ENCODE measurements at regions of chr11 and their contacts with region 1.

Region 1: DNA sequence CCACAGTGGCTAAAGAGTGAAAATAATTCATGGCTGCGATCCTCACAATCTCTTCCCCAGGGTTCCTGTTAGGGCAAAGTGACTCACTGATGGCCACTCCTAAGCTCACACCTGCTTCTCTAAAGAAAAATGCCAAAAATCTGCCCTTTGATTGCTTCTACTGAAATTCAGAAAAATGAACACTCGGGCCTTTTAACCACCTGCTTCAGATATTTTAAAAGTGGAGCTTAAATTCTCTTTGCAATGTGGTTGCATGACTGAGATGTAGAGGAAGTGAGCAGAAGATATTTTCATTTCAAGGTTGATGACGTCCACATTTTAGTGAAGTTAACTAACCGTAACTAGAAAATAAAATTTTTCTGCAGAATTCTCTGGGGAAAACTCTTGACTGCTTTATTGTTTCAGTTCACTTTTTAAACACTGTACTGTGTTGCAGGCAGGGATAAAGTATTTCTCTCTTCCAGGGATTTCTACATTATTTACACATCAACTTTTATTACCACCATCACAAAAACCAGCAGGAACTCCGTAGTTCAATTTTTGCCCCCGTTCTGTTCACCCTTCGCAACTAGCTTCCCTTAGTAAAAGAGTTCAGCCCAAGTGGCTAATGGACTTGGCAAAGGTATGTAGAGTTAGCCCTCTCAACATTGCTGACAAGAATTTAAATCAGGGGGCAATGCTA is 8.5 kb downstream of the RAB30 start:
- DNase-seq: peak; percentile 88
- ATAC-seq: peak; percentile 77
- H3K4me3 ChIP-seq: peak overlapping the region; percentile 66
- H3K27ac ChIP-seq: peak overlapping the region; percentile 96
- H3K4me1 ChIP-seq: peaks cover 43% of the 10 kb centered on the region
- H3K27me3 ChIP-seq: no peaks in the 10 kb centered on the region
- CTCF ChIP-seq: no peak
- EP300 ChIP-seq: peak; percentile 96 to 98
- POLR2A ChIP-seq: no peak
- RAD21 ChIP-seq: no peak

Region 2: DNA sequence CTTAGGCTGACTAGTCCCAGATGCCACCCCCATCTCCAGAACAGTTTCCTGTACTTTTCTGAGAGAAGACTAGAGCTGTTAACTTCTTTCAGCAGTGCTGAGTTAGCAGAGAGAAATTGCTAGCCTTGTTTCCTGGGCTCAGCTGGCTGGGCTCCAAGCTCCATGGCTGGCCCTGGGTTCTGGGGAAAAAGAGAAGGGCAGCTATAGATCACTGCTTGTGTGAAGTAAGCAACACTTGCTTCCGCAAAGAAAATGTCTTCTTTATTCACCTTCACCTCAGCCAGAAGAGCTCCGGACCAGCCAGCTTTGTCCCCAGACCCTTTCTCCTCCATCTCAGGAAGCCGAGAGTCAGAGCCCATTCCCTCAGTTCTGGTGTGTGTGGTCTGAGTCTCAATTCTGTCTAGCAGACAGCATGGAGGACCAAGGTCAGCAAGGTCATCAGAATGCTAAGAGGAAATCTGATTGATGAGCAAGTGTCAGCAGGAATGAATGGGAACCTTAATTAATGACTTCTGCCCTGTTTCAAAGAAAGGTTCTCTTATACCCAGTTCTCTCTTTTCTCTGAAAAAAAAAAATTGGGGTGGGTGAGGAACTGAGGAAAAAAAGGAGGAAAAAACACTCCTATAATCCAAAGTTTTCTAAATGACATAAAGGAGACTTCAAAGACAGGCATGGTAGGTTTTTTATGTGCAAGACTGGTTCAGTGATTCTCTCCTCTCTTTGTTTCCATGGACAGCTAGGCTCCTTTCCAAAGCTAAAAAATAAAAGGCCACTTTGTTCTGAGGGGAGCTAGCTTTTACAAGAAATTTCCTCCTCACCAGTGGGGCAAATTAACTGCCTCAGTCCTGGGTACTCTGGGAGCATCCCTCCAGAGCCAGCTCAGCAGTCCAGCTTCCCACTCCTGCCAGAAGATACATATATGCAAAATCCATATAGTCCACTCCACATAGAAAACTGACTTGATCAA is 265.9 kb before region 1 on chr11:
- CTCF ChIA-PET with region 1: no interaction called
- POLR2A ChIA-PET with region 1: no interaction called
- RAD21 ChIA-PET with region 1: no interaction called
- SMC1A ChIA-PET with region 1: no interaction called
- in situ Hi-C with region 1: no loop called
- intact Hi-C with region 1: no loop called
- DNase-seq: no peak
- ATAC-seq: no peak
- H3K4me3 ChIP-seq: no peak overlapping the region
- H3K27ac ChIP-seq: no peak overlapping the region
- H3K4me1 ChIP-seq: no peaks in the 10 kb centered on the region
- H3K27me3 ChIP-seq: no peaks in the 10 kb centered on the region; a peak in 1 of 4 replicates
- CTCF ChIP-seq: no peak
- EP300 ChIP-seq: no peak
- POLR2A ChIP-seq: no peak
- RAD21 ChIP-seq: no peak

Region 3: GRCh38 chr11:82927254-82927880 is 135.8 kb before region 1 on chr11:
- CTCF ChIA-PET with region 1: interaction called, 4 read pairs
- POLR2A ChIA-PET with region 1: interaction called, 4 read pairs
- RAD21 ChIA-PET with region 1: interaction called, 13 read pairs
- SMC1A ChIA-PET with region 1: interaction called, 21 read pairs
- in situ Hi-C with region 1: no loop called
- intact Hi-C with region 1: no loop called
- DNase-seq: no peak
- ATAC-seq: peak; percentile 93
- H3K4me3 ChIP-seq: no peak overlapping the region
- H3K27ac ChIP-seq: no peak overlapping the region; the same call in 1 of the 2 replicates
- H3K4me1 ChIP-seq: peaks cover 20% of the 10 kb centered on the region
- H3K27me3 ChIP-seq: no peaks in the 10 kb centered on the region
- CTCF ChIP-seq: peak; percentile 73 to 77 (median 76)
- EP300 ChIP-seq: no peak
- POLR2A ChIP-seq: no peak
- RAD21 ChIP-seq: peak; percentile 63

Region 4: GRCh38 chr11:82969811-82970210 is 93.4 kb before region 1 on chr11:
- CTCF ChIA-PET with region 1: interaction called, 3 read pairs
- POLR2A ChIA-PET with region 1: interaction called, 7 read pairs
- RAD21 ChIA-PET with region 1: interaction called, 13 read pairs
- SMC1A ChIA-PET with region 1: interaction called, 29 read pairs
- in situ Hi-C with region 1: no loop called
- intact Hi-C with region 1: loop called (anchors 1 kb)
- DNase-seq: peak; percentile 84
- ATAC-seq: peak; percentile 83
- H3K4me3 ChIP-seq: no peak overlapping the region
- H3K27ac ChIP-seq: peak overlapping the region; percentile 94
- H3K4me1 ChIP-seq: peaks cover 41% of the 10 kb centered on the region
- H3K27me3 ChIP-seq: no peaks in the 10 kb centered on the region
- CTCF ChIP-seq: no peak
- EP300 ChIP-seq: peak; percentile 99 to 100
- POLR2A ChIP-seq: no peak
- RAD21 ChIP-seq: no peak

Region 5: DNA sequence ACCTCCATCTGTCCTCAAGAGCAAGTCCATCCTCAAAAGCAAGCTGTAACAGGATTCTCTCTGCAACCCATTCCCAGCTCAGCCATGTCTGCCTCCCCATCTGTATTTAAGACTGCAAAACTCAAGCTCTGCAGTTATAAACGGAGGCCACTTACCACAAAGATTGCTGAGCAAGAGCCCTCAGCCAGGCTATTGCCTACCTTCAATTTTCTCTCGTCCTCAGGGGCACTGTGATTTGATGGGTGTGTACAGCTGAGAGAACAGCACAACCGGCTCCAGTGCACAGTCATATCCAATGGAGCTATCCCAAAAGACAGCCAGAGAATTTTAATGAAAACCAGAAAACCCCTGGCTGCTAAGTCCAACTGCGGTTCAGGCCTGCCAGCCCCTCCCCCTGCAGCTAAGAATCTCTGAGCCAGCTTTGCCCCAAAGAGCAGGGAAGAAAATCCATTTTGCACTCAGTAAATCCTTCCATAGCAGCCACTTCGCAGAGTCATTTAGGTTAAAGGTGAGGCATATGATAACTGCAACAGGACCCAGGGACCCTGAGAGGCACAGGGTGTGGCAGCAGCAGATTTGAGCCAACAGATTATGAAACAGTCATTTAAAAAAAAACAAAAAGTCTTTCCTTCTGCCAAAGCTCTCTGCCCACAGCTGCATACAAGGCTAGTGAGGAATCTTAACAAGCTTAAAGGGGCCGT is 29.1 kb before region 1 on chr11:
- CTCF ChIA-PET with region 1: interaction called, 3 read pairs
- POLR2A ChIA-PET with region 1: interaction called, 21 read pairs
- RAD21 ChIA-PET with region 1: interaction called, 4 read pairs
- SMC1A ChIA-PET with region 1: interaction called, 44 read pairs
- in situ Hi-C with region 1: no loop called
- intact Hi-C with region 1: no loop called
- DNase-seq: no peak
- ATAC-seq: peak; percentile 50
- H3K4me3 ChIP-seq: 0 out of 2 replicates have a peak overlapping the region, but pooled peaks have one; percentile 10
- H3K27ac ChIP-seq: no peak overlapping the region
- H3K4me1 ChIP-seq: peaks cover 21% of the 10 kb centered on the region
- H3K27me3 ChIP-seq: no peaks in the 10 kb centered on the region
- CTCF ChIP-seq: no peak
- EP300 ChIP-seq: no peak
- POLR2A ChIP-seq: no peak
- RAD21 ChIP-seq: no peak

Region 6: GRCh38 chr11:83051760-83052671 is 11.2 kb before region 1 on chr11:
- CTCF ChIA-PET with region 1: interaction called, 6 read pairs
- POLR2A ChIA-PET with region 1: interaction called, 21 read pairs
- RAD21 ChIA-PET with region 1: interaction called, 9 read pairs
- SMC1A ChIA-PET with region 1: interaction called, 29 read pairs
- in situ Hi-C with region 1: no loop called
- intact Hi-C with region 1: no loop called
- DNase-seq: no peak
- ATAC-seq: no peak
- H3K4me3 ChIP-seq: no peak overlapping the region
- H3K27ac ChIP-seq: no peak overlapping the region
- H3K4me1 ChIP-seq: peaks cover 40% of the 10 kb centered on the region
- H3K27me3 ChIP-seq: no peaks in the 10 kb centered on the region
- CTCF ChIP-seq: no peak
- EP300 ChIP-seq: no peak
- POLR2A ChIP-seq: no peak
- RAD21 ChIP-seq: no peak

Region 7: DNA sequence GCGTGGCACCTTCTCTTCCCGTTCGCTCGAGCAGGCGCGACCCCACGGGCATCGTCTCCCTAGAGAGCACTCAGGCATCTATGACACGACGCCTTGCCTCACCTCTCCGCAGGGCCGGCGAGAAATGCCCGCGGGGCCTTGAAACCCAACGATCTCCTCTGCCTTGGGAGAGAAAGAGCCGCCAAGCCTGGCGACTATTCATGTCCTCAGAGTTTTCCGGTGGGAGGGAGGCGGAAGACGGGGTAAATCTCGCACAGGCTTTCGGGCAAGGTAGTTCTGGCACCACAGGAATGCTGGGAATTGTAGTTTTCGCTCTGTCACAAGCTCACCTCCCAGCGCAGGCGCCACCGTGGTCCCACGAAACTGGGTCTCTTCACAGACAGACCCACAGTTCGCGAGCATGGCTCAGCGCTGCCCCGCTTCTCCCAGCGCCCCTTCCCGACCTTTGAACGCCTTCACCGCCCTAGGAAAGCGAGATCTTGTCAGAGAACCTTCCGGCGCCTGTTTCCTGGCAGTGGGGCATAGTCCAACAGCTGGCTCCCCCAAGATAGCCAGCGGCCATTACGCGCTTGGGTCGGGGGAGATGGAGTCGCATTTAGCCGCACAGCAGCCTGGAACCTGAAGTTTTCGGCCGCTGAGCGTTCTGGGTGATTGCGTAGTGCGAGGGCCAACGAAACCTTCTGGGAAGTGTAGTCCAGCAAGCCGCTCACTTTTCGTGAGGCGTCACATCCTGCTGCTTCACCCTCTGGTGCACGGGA is 222.7 kb after region 1 on chr11 and contains the start of gene CCDC90B:
- CTCF ChIA-PET with region 1: interaction called, 4 read pairs
- POLR2A ChIA-PET with region 1: no interaction called
- RAD21 ChIA-PET with region 1: no interaction called
- SMC1A ChIA-PET with region 1: no interaction called
- in situ Hi-C with region 1: no loop called
- intact Hi-C with region 1: loop called (anchors 5 kb)
- DNase-seq: peak; percentile 96
- ATAC-seq: peak; percentile 93
- H3K4me3 ChIP-seq: peak within 1 kb of the TSS; percentile 78
- H3K27ac ChIP-seq: peak within 1 kb of the TSS; percentile 96
- H3K4me1 ChIP-seq: peaks cover 21% of the 10 kb centered on the region
- H3K27me3 ChIP-seq: no peaks in the 10 kb centered on the region
- CTCF ChIP-seq: peak in 2 of 3 experiments; percentile 30 to 75; a peak in 3 of 6 replicates
- EP300 ChIP-seq: 0 out of 4 replicates have a peak, but pooled peaks of 1 of the 2 experiments have one; percentile 42
- POLR2A ChIP-seq: peak; percentile 96
- RAD21 ChIP-seq: no peak
- polyA plus RNA-seq, gene CCDC90B: 76.2 to 82.8 TPM

Measured in GM12878 (cell line).